ENCODE measurements at regions of chr1 and their contacts with region 1.

Region 1: GRCh38 chr1:175757381-175758015 is 14.1 kb upstream of the TNR start:
- DNase-seq: peak; percentile 63
- H3K4me3 ChIP-seq: no peak overlapping the region
- H3K27ac ChIP-seq: no peak overlapping the region
- H3K4me1 ChIP-seq: no peaks in the 10 kb centered on the region
- CTCF ChIP-seq: peak; percentile 98

Region 2: DNA sequence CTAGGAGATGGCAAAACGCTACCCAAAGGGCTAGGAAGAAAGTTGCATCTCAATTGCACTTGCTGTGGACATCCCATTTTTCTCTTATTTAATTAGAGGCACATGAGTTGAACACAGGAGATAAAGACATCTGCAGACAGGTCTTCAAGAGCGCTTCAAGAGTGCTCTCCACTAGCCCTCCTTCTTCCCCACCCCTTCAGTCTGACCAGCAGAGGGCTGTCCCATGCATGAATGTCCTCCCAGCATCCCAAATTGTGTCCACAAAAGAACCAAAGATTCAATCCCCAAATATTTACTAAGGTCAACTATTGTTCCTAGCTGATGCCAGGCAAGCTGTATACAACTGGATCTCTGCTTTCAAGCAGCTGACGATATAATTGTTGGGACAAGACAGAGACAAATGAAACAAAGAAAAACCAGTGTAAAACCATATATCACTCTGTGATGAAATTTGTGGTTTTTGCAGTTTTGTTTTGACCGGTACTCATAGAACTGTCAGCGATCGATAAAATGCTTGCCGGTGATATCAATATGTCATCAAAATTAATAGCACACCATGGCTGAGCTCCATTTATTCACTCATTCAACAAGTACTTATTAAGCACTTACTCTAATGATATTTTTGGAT is 188.3 kb before region 1 on chr1:
- CTCF ChIA-PET with region 1: no interaction called
- POLR2A ChIA-PET with region 1: no interaction called
- intact Hi-C with region 1: loop called (anchors 5 kb)
- DNase-seq: no peak
- H3K4me3 ChIP-seq: no peak overlapping the region
- H3K27ac ChIP-seq: no peak overlapping the region
- H3K4me1 ChIP-seq: no peaks in the 10 kb centered on the region
- CTCF ChIP-seq: peak; percentile 49

Measured in OCI-LY7 (cell line).